T-cell (primary cell): ENCODE measurements at regions of chr4 and their contacts with region 1.

Region 1: DNA sequence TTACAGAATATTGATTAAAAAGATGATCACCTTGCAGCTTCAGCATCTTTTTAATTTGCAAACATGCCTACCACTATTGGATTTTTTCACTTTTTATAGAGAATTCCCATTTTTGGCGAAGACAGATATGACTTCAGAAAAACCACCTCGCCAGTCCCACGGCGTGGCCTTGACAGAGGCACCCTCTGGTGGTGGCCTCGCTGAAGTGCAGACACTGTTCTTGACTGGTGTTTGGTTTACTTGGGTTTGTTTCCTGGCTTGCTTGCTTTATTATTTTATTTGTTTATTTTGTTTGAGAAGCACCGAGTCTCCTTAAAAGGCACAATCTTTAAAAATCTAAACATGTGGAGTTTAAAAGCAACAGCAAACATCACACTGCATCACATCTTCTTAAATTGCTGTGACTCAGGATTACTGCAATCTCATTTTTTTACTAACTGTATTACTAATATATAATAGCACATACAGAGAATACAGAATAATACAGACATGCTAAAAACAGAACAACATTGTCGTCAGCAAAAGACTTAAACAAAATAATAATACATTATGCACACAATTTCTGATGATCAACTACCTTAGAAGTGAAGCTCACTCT is 13.1 kb upstream of the AMTN start:
- DNase-seq: peak in 32 of 35 experiments; percentile 3 to 57 (median 26)
- ATAC-seq: peak; percentile 52 to 69 (median 62)
- H3K4me3 ChIP-seq: no peak overlapping the region
- H3K4me3 Mint-ChIP-seq: no peak overlapping the region
- H3K27ac ChIP-seq: no peak overlapping the region
- H3K27ac Mint-ChIP-seq: no peak overlapping the region
- H3K4me1 ChIP-seq: no peaks in the 10 kb centered on the region
- H3K4me1 Mint-ChIP-seq: no peaks in the 10 kb centered on the region
- H3K27me3 ChIP-seq: no peaks in the 10 kb centered on the region
- H3K27me3 Mint-ChIP-seq: peaks cover 0 to 4% of the 10 kb centered on the region in 2 donors

Region 2: DNA sequence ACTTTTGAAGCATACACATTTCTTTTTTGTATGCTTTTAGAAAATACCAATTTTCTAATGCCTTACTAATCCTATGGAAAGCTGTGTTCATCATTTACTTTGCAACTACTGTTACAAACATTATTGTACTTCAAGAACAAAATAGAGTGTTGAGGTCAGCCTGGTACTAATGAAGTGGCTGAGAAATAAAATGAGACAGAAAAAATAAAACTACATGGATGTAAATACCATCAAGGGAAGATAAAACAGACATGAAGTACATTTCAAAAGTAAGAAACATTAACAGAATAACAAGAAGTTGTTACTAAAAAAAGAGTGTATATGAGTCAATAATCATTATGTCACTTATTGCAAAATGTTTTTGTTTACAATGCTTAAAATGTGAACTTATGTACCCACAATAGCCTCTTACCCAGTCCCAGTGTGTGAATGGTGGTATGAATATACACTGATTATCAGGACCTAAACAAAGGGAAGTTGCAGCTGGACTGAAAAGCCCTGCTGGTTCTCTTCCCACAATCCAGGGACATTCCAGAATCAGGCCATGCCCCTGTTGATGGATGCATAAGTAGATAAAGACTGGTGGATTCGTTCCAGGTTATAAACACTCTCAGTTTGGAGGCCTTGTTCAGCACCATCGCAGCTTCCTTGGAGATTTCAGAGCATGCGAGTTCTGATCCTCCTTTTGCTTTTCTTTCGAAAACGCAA is 265.2 kb before region 1 on chr4:
- CTCF ChIA-PET with region 1: no interaction called
- POLR2A ChIA-PET with region 1: no interaction called
- DNase-seq: no peak
- ATAC-seq: no peak
- H3K4me3 ChIP-seq: no peak overlapping the region
- H3K4me3 Mint-ChIP-seq: no peak overlapping the region
- H3K27ac ChIP-seq: no peak overlapping the region
- H3K27ac Mint-ChIP-seq: no peak overlapping the region
- H3K4me1 ChIP-seq: no peaks in the 10 kb centered on the region
- H3K4me1 Mint-ChIP-seq: no peaks in the 10 kb centered on the region
- H3K27me3 ChIP-seq: no peaks in the 10 kb centered on the region
- H3K27me3 Mint-ChIP-seq: no peaks in the 10 kb centered on the region

Region 3: GRCh38 chr4:70380578-70380977 is 124.7 kb before region 1 on chr4:
- CTCF ChIA-PET with region 1: no interaction called
- POLR2A ChIA-PET with region 1: interaction called in 1 of 2 experiments, 11 read pairs
- DNase-seq: no peak
- ATAC-seq: no peak
- H3K4me3 ChIP-seq: no peak overlapping the region
- H3K4me3 Mint-ChIP-seq: no peak overlapping the region
- H3K27ac ChIP-seq: no peak overlapping the region
- H3K27ac Mint-ChIP-seq: no peak overlapping the region
- H3K4me1 ChIP-seq: no peaks in the 10 kb centered on the region
- H3K4me1 Mint-ChIP-seq: no peaks in the 10 kb centered on the region
- H3K27me3 ChIP-seq: no peaks in the 10 kb centered on the region
- H3K27me3 Mint-ChIP-seq: no peaks in the 10 kb centered on the region

Region 4: GRCh38 chr4:71267244-71267643 is 762.0 kb after region 1 on chr4:
- CTCF ChIA-PET with region 1: no interaction called
- POLR2A ChIA-PET with region 1: interaction called in 1 of 2 experiments, 12 read pairs
- DNase-seq: no peak
- ATAC-seq: no peak
- H3K4me3 ChIP-seq: no peak overlapping the region
- H3K4me3 Mint-ChIP-seq: no peak overlapping the region
- H3K27ac ChIP-seq: no peak overlapping the region
- H3K27ac Mint-ChIP-seq: no peak overlapping the region
- H3K4me1 ChIP-seq: peaks cover 0 to 5% of the 10 kb centered on the region in 2 experiments
- H3K4me1 Mint-ChIP-seq: peaks cover 3 to 10% (median 7%) of the 10 kb centered on the region in 3 donors
- H3K27me3 ChIP-seq: no peaks in the 10 kb centered on the region
- H3K27me3 Mint-ChIP-seq: peaks cover 0 to 4% of the 10 kb centered on the region in 2 donors